ENCODE measurements at regions of chr9 and their contacts with region 1.

Region 1: DNA sequence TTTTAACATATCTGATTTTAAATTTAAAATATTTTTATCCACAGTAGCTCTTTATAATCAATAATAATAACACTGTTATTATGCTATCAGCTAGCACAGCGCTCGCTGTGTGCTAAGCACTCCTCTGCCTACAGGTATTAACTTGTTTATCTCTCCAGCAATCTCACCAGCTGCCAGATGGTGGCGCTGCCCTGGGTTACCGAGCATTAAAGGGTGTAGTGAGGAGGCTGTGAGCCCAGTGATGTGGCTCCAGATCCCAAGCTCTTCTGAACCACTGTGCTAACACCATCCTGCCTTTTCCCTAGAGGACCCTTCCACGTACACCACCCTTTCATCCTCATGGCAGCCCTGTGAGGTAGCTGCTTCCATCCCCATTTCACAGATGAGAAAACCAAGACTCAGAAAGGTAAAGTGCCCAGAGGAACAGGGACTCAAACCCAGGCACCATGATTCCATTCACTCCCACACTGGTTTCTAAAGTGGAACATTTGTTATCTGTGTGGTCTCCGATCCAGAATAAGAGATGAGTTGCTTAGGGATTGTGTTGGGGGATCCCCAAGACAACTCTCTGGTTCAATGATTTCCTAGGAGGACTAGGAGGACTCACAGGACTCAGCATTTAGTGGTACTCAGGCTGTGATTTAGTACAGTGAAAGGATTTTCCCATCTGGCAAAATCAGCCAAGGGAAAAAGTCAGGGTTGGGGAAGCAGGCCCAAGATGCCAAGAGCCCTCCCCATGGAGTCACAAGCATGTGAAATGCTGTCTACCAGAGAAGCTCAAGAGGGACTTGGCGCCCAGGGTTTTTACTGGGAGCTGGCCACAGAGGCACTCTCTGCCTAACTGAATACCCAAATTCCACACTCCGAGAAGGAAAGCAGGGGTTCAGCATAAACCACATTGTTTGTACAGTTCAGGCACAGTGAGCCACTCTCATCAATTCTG is 7.0 kb downstream of the IGFBPL1 start:
- DNase-seq: no peak
- ATAC-seq: no peak
- H3K4me3 ChIP-seq: no peak overlapping the region
- H3K27ac ChIP-seq: no peak overlapping the region
- H3K4me1 ChIP-seq: no peaks in the 10 kb centered on the region
- H3K27me3 ChIP-seq: peaks cover 0 to 54% (median 31%) of the 10 kb centered on the region in 7 donors
- CTCF ChIP-seq: peak in 3 of 9 donors; percentile 25 to 42 (median 31)

Region 2: GRCh38 chr9:38727497-38728001 is 310.3 kb after region 1 on chr9:
- intact Hi-C with region 1: loop called in 1 of 10 experiments (anchors 10 kb)
- DNase-seq: peak in 1 of 2 donors; percentile 7
- ATAC-seq: peak in 1 of 8 donors; percentile 76
- H3K4me3 ChIP-seq: no peak overlapping the region
- H3K27ac ChIP-seq: no peak overlapping the region
- H3K4me1 ChIP-seq: no peaks in the 10 kb centered on the region
- H3K27me3 ChIP-seq: no peaks in the 10 kb centered on the region
- CTCF ChIP-seq: peak in 7 of 9 donors; percentile 26 to 44 (median 39)

Measured in heart right ventricle (tissue), 16 donors.